CD4-positive, alpha-beta T cell (primary cell): ENCODE measurements at regions of chr13 and their contacts with region 1.

Region 1: DNA sequence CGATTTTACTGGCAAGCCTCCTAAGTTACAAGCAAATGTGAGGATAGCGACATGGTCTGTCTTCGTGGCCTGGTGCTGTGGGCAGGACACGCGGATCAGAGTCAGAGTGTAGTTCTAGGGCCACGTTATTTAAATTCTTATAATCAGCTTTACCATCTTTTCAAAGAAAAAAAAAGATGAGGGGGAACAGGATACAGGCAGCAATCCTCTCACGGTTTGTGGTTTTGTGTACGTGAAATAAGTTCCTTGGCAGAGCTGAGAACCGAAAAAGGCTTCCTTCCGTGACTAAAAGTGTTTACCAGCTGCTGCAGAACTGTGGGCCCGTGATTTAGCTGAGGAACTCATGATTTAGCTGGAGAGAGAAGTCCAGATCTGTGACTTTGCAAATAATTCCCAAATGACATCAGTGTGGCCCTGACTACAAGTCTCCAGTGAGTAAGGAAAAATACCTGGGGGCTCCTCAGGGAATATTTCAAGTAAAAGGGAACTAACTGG is 27.2 kb downstream of the RCBTB2 start:
- DNase-seq: peak in 12 of 14 experiments; percentile 27 to 91 (median 46)
- ATAC-seq: peak; percentile 93
- H3K4me3 ChIP-seq: no peak overlapping the region
- H3K4me3 Mint-ChIP-seq: peak overlapping the region; percentile 54
- H3K27ac ChIP-seq: peak overlapping the region; percentile 52 to 58
- H3K27ac Mint-ChIP-seq: peak overlapping the region; percentile 91
- H3K4me1 ChIP-seq: peaks cover 46% of the 10 kb centered on the region
- H3K4me1 Mint-ChIP-seq: peaks cover 55% of the 10 kb centered on the region
- H3K27me3 ChIP-seq: no peaks in the 10 kb centered on the region
- H3K27me3 Mint-ChIP-seq: no peaks in the 10 kb centered on the region
- CTCF ChIP-seq: no peak

Region 2: GRCh38 chr13:48400850-48401291 is 104.8 kb before region 1 on chr13:
- CTCF ChIA-PET with region 1: no interaction called
- POLR2A ChIA-PET with region 1: interaction called, 11 read pairs
- intact Hi-C with region 1: no loop called
- DNase-seq: peak in 3 of 14 experiments; percentile 41 to 60 (median 55)
- ATAC-seq: peak; percentile 68
- H3K4me3 ChIP-seq: peak overlapping the region; percentile 16
- H3K4me3 Mint-ChIP-seq: peak overlapping the region; percentile 13
- H3K27ac ChIP-seq: peak overlapping the region in 1 of 2 donors; percentile 26
- H3K27ac Mint-ChIP-seq: peak overlapping the region; percentile 37
- H3K4me1 ChIP-seq: peaks cover 25% of the 10 kb centered on the region
- H3K4me1 Mint-ChIP-seq: peaks cover 60% of the 10 kb centered on the region
- H3K27me3 ChIP-seq: no peaks in the 10 kb centered on the region
- H3K27me3 Mint-ChIP-seq: no peaks in the 10 kb centered on the region
- CTCF ChIP-seq: peak; percentile 48

Region 3: DNA sequence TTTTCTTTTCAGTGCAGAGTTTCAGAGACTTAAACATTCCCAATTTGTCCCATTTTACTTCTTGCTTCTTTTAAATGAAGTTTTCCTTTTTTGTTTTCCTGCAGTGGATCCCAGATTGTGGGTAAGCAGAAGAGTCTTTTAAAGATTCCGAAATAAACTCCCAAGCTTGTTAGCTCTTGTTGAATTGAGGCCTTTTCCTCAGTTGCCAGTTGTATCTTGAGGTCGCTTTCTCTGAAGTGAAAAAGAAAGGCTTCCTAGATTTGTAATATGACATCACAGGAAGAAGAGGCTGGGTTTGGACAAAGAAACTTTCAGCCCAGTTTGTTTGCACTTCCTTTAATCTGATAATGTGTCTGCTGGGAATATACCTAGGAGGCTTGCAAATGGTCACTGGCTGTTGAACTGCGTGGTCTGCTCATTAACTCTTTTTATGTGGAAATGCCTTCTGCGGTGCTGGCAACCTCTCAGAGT is 92.7 kb before region 1 on chr13 and contains the start of gene LPAR6:
- CTCF ChIA-PET with region 1: no interaction called
- POLR2A ChIA-PET with region 1: interaction called, 17 read pairs
- intact Hi-C with region 1: loop called in 1 of 2 experiments (anchors 2 kb)
- DNase-seq: peak in 4 of 14 experiments; percentile 23 to 87 (median 72)
- ATAC-seq: peak; percentile 52
- H3K4me3 ChIP-seq: peak within 1 kb of the TSS; percentile 88
- H3K4me3 Mint-ChIP-seq: peak within 1 kb of the TSS; percentile 95
- H3K27ac ChIP-seq: peak within 1 kb of the TSS; percentile 67 to 78
- H3K27ac Mint-ChIP-seq: peak within 1 kb of the TSS; percentile 95
- H3K4me1 ChIP-seq: peaks cover 12% of the 10 kb centered on the region
- H3K4me1 Mint-ChIP-seq: peaks cover 44% of the 10 kb centered on the region
- H3K27me3 ChIP-seq: no peaks in the 10 kb centered on the region
- H3K27me3 Mint-ChIP-seq: no peaks in the 10 kb centered on the region
- CTCF ChIP-seq: no peak
- total RNA-seq, gene LPAR6: 15.5 to 19.4 TPM

Region 4: GRCh38 chr13:48492470-48493065 is 13.1 kb before region 1 on chr13:
- CTCF ChIA-PET with region 1: interaction called, 3 read pairs
- POLR2A ChIA-PET with region 1: interaction called, 51 read pairs
- intact Hi-C with region 1: loop called (anchors 1 to 2 kb)
- DNase-seq: peak; percentile 46 to 92 (median 62)
- ATAC-seq: peak; percentile 83
- H3K4me3 ChIP-seq: peak overlapping the region; percentile 58
- H3K4me3 Mint-ChIP-seq: no peak overlapping the region
- H3K27ac ChIP-seq: peak overlapping the region; percentile 57 to 79
- H3K27ac Mint-ChIP-seq: no peak overlapping the region
- H3K4me1 ChIP-seq: peaks cover 54% of the 10 kb centered on the region
- H3K4me1 Mint-ChIP-seq: peaks cover 25% of the 10 kb centered on the region
- H3K27me3 ChIP-seq: no peaks in the 10 kb centered on the region
- H3K27me3 Mint-ChIP-seq: no peaks in the 10 kb centered on the region
- CTCF ChIP-seq: no peak

Region 5: GRCh38 chr13:48562296-48563066 is 56.8 kb after region 1 on chr13:
- CTCF ChIA-PET with region 1: no interaction called
- POLR2A ChIA-PET with region 1: interaction called, 21 read pairs
- intact Hi-C with region 1: loop called (anchors 1 to 5 kb)
- DNase-seq: peak; percentile 25 to 93 (median 52)
- ATAC-seq: peak; percentile 98
- H3K4me3 ChIP-seq: peak overlapping the region; percentile 8
- H3K4me3 Mint-ChIP-seq: peak overlapping the region; percentile 11
- H3K27ac ChIP-seq: no peak overlapping the region
- H3K27ac Mint-ChIP-seq: peak overlapping the region; percentile 6
- H3K4me1 ChIP-seq: peaks cover 19% of the 10 kb centered on the region
- H3K4me1 Mint-ChIP-seq: peaks cover 59% of the 10 kb centered on the region
- H3K27me3 ChIP-seq: no peaks in the 10 kb centered on the region
- H3K27me3 Mint-ChIP-seq: peaks cover 29% of the 10 kb centered on the region
- CTCF ChIP-seq: no peak

Region 6: GRCh38 chr13:48567515-48568369 is 62.1 kb after region 1 on chr13:
- CTCF ChIA-PET with region 1: no interaction called
- POLR2A ChIA-PET with region 1: interaction called, 21 read pairs
- intact Hi-C with region 1: loop called (anchors 1 to 5 kb)
- DNase-seq: peak in 1 of 14 experiments; percentile 19
- ATAC-seq: no peak
- H3K4me3 ChIP-seq: no peak overlapping the region
- H3K4me3 Mint-ChIP-seq: no peak overlapping the region
- H3K27ac ChIP-seq: no peak overlapping the region
- H3K27ac Mint-ChIP-seq: no peak overlapping the region
- H3K4me1 ChIP-seq: peaks cover 23% of the 10 kb centered on the region
- H3K4me1 Mint-ChIP-seq: peaks cover 31% of the 10 kb centered on the region
- H3K27me3 ChIP-seq: peaks cover 0 to 4% of the 10 kb centered on the region in 2 experiments
- H3K27me3 Mint-ChIP-seq: peaks cover 20% of the 10 kb centered on the region
- CTCF ChIP-seq: no peak